Caco-2 (cell line): ENCODE measurements at regions of chr5 and their contacts with region 1.

Region 1: GRCh38 chr5:140107312-140108083 is 6.4 kb upstream of the PURA start:
- DNase-seq: peak; percentile 94 to 95
- H3K4me3 ChIP-seq: peak overlapping the region; percentile 73
- H3K4me3 Mint-ChIP-seq: peak overlapping the region; percentile 94
- H3K27ac Mint-ChIP-seq: peak overlapping the region; percentile 92
- H3K4me1 ChIP-seq: peaks cover 4% of the 10 kb centered on the region; the same call in 1 of the 2 replicates
- H3K4me1 Mint-ChIP-seq: peaks cover 14% of the 10 kb centered on the region
- H3K27me3 ChIP-seq: no peaks in the 10 kb centered on the region
- H3K27me3 Mint-ChIP-seq: peaks cover 1% of the 10 kb centered on the region
- CTCF ChIP-seq: peak in 1 of 2 experiments; percentile 13

Region 2: DNA sequence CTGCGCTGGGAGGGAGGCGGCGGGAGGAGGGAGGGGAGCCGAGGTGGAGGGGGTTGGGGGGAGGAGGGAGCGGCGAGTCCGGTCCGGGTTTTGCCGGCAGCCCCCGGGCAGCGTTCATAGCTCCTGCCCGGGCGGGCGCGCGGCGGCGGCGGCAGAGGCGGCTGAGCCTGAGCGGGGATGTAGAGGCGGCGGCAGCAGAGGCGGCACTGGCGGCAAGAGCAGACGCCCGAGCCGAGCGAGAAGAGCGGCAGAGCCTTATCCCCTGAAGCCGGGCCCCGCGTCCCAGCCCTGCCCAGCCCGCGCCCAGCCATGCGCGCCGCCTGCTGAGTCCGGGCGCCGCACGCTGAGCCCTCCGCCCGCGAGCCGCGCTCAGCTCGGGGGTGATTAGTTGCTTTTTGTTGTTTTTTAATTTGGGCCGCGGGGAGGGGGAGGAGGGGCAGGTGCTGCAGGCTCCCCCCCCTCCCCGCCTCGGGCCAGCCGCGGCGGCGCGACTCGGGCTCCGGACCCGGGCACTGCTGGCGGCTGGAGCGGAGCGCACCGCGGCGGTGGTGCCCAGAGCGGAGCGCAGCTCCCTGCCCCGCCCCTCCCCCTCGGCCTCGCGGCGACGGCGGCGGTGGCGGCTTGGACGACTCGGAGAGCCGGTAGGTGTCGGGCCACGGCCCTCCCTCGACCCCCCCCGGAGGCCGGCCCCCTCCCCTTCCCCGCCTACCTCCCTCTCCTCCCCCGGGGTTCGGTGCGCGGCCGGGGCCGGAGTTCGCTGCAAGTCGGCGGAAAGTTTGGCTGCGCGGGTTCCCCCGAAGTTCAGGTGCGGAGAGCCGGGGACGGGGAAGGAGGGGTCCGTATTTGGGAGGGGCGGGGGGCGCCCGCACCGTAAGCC is 459.1 kb before region 1 on chr5 and contains the start of gene CXXC5:
- CTCF ChIA-PET with region 1: no interaction called
- POLR2A ChIA-PET with region 1: no interaction called
- intact Hi-C with region 1: loop called (anchors 10 kb)
- DNase-seq: peak; percentile 88 to 90
- H3K4me3 ChIP-seq: peak within 1 kb of the TSS; percentile 91
- H3K4me3 Mint-ChIP-seq: peak within 1 kb of the TSS; percentile 93
- H3K27ac Mint-ChIP-seq: no peak within 1 kb of the TSS
- H3K4me1 ChIP-seq: peaks cover 58% of the 10 kb centered on the region
- H3K4me1 Mint-ChIP-seq: peaks cover 48% of the 10 kb centered on the region
- H3K27me3 ChIP-seq: no peaks in the 10 kb centered on the region
- H3K27me3 Mint-ChIP-seq: no peaks in the 10 kb centered on the region
- CTCF ChIP-seq: no peak
- total RNA-seq, gene CXXC5: 79.5 and 92.3 TPM in 2 replicates

Region 3: DNA sequence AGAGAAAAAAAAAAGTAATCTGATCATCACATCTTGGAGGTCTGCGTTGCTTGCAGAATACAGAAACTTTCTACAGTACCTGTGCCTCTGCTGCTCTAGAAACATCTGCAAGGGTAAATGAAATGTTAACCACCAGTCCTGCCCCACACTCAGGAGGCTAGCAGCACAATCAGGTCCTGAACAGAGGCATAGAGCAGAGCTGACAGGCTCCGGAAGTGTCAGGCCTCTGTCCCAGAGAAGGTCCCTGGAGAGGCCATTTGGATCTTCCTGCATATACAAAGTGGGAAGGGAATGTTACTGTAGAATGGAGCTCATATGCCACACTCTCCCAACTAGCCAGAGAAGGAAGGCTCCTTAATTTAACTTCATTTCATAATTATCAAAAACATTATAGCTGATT is 71.6 kb before region 1 on chr5:
- CTCF ChIA-PET with region 1: no interaction called
- POLR2A ChIA-PET with region 1: no interaction called
- intact Hi-C with region 1: no loop called
- DNase-seq: no peak
- H3K4me3 ChIP-seq: no peak overlapping the region
- H3K4me3 Mint-ChIP-seq: no peak overlapping the region
- H3K27ac Mint-ChIP-seq: no peak overlapping the region
- H3K4me1 ChIP-seq: no peaks in the 10 kb centered on the region
- H3K4me1 Mint-ChIP-seq: no peaks in the 10 kb centered on the region
- H3K27me3 ChIP-seq: no peaks in the 10 kb centered on the region
- H3K27me3 Mint-ChIP-seq: peaks cover 11% of the 10 kb centered on the region
- CTCF ChIP-seq: no peak

Region 4: GRCh38 chr5:140073296-140073695 is 34.2 kb before region 1 on chr5:
- CTCF ChIA-PET with region 1: interaction called, 3 read pairs
- POLR2A ChIA-PET with region 1: interaction called, 7 read pairs
- intact Hi-C with region 1: loop called (anchors 2 kb)
- DNase-seq: no peak
- H3K4me3 ChIP-seq: no peak overlapping the region
- H3K4me3 Mint-ChIP-seq: no peak overlapping the region
- H3K27ac Mint-ChIP-seq: no peak overlapping the region
- H3K4me1 ChIP-seq: no peaks in the 10 kb centered on the region
- H3K4me1 Mint-ChIP-seq: peaks cover 7% of the 10 kb centered on the region
- H3K27me3 ChIP-seq: no peaks in the 10 kb centered on the region
- H3K27me3 Mint-ChIP-seq: peaks cover 5% of the 10 kb centered on the region
- CTCF ChIP-seq: peak; percentile 31 to 70

Region 5: GRCh38 chr5:140094889-140095288 is 12.6 kb before region 1 on chr5:
- CTCF ChIA-PET with region 1: interaction called, 4 read pairs
- POLR2A ChIA-PET with region 1: interaction called, 4 read pairs
- intact Hi-C with region 1: loop called (anchors 1 kb)
- DNase-seq: no peak
- H3K4me3 ChIP-seq: no peak overlapping the region
- H3K4me3 Mint-ChIP-seq: no peak overlapping the region
- H3K27ac Mint-ChIP-seq: no peak overlapping the region
- H3K4me1 ChIP-seq: no peaks in the 10 kb centered on the region
- H3K4me1 Mint-ChIP-seq: no peaks in the 10 kb centered on the region
- H3K27me3 ChIP-seq: 0 out of 2 replicates have a peak, but pooled peaks cover 1% of the 10 kb centered on the region
- H3K27me3 Mint-ChIP-seq: peaks cover 5% of the 10 kb centered on the region
- CTCF ChIP-seq: no peak

Region 6: GRCh38 chr5:140157032-140157803 is 49.7 kb after region 1 on chr5:
- CTCF ChIA-PET with region 1: no interaction called
- POLR2A ChIA-PET with region 1: no interaction called
- intact Hi-C with region 1: loop called (anchors 2 kb)
- DNase-seq: peak; percentile 83 to 89
- H3K4me3 ChIP-seq: no peak overlapping the region
- H3K4me3 Mint-ChIP-seq: no peak overlapping the region
- H3K27ac Mint-ChIP-seq: no peak overlapping the region
- H3K4me1 ChIP-seq: peaks cover 6% of the 10 kb centered on the region; the same call in 1 of the 2 replicates
- H3K4me1 Mint-ChIP-seq: peaks cover 2% of the 10 kb centered on the region
- H3K27me3 ChIP-seq: no peaks in the 10 kb centered on the region
- H3K27me3 Mint-ChIP-seq: no peaks in the 10 kb centered on the region
- CTCF ChIP-seq: peak; percentile 91 to 96